ENCODE measurements at regions of chr9 and their contacts with region 1.

Region 1: DNA sequence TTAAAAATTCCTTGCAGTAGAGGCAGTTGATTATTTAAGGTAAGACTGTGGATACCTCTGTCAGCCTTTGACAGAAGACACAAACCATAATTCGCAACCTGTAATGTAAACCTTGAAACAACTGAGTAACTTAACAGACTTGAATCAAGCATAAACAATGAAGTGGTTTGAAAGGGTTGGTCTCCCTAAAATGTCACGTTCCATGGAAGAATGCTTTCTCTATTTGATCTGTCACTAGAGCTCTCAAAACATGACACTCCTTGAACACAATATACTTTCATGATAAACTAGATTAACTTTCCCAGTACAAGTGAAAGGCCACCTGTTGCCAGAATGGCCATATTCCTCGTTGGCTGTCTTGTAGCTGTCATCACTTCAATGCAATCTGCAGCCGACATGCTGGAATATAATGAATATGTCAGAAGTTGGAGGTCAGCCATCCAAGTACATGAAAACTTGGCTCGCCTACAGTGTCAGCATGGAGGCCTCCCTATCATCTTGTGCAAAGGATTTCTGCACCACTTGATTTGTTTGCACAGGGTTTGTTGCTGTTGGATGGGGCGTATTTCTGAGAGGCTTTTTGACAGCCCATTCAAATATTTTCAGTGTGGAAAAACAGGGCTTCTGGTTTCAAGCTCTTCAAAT is 228.0 kb downstream of the TLE4 start:
- DNase-seq: no peak
- H3K4me3 ChIP-seq: no peak overlapping the region
- H3K27ac ChIP-seq: no peak overlapping the region
- H3K4me1 ChIP-seq: no peaks in the 10 kb centered on the region
- H3K27me3 ChIP-seq: no peaks in the 10 kb centered on the region
- CTCF ChIP-seq: no peak

Region 2: DNA sequence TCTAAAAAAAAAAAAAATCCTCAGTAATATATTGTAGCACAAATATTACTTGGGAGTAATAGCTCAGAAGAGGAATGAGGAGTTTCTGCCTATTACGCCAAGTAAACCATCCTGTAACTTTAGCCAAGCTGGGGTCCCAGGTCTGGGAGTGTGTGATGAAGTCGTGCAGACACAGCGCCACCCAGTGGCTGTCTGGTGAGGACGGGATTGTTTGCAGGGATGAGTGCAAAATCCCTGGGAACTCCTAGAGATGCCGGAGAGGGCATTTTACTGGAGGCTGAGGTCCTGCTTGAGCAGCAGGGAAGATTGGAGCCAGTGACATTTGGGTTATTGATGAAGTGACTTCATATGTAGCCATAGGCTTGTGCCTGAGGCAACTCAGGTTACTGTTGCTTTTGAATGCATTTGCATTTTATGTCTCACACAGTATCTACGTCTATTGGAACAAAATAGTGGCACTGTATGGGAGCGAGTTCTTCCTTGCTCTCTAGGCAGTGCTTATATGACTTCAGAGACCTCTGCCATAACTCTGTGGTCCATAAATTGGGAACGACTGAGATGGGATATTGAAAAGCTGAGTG is 1430.1 kb before region 1 on chr9:
- CTCF ChIA-PET with region 1: interaction called, 10 read pairs
- POLR2A ChIA-PET with region 1: no interaction called
- intact Hi-C with region 1: no loop called
- DNase-seq: peak in 1 of 2 experiments; percentile 49
- H3K4me3 ChIP-seq: no peak overlapping the region
- H3K27ac ChIP-seq: no peak overlapping the region
- H3K4me1 ChIP-seq: no peaks in the 10 kb centered on the region
- H3K27me3 ChIP-seq: peaks cover 16% of the 10 kb centered on the region; the same call in 1 of the 2 replicates
- CTCF ChIP-seq: peak; percentile 87

Measured in PC-9 (cell line).